Aorta (tissue), 5 donors: ENCODE measurements at regions of chr7 and their contacts with region 1.

Region 1: GRCh38 chr7:130010689-130011412 is 40.3 kb downstream of the ZC3HC1 start:
- DNase-seq: peak; percentile 87
- ATAC-seq: peak; percentile 86
- H3K4me3 ChIP-seq: no peak overlapping the region
- H3K27ac ChIP-seq: peak overlapping the region in 1 of 2 donors; percentile 47
- H3K4me1 ChIP-seq: peaks cover 0 to 3% of the 10 kb centered on the region in 2 donors
- H3K27me3 ChIP-seq: no peaks in the 10 kb centered on the region

Region 2: GRCh38 chr7:129664029-129665012 is 346.5 kb before region 1 on chr7:
- intact Hi-C with region 1: loop called (anchors 2 to 5 kb)
- DNase-seq: no peak
- ATAC-seq: no peak
- H3K4me3 ChIP-seq: no peak overlapping the region
- H3K27ac ChIP-seq: no peak overlapping the region
- H3K4me1 ChIP-seq: no peaks in the 10 kb centered on the region
- H3K27me3 ChIP-seq: no peaks in the 10 kb centered on the region

Region 3: DNA sequence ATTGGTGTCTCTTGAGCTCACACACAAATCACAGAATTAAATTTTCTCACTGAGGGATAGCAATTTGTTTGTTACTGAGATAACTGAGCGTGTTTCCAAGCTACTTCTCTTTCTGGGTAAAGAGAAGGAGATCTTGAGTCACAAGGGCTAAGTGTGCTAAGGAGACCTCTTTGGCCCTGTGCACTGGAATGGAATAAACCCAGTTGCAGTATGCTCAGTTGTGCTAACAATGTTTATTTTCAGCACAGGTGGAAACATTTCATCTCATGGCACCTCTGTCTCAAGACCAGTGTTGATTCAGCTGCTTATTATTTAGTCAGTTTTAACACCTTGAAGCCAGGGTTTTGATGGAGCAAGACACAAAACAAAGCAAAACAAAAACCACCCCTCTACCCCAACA is 35.5 kb before region 1 on chr7:
- intact Hi-C with region 1: no loop called
- DNase-seq: no peak
- ATAC-seq: no peak
- H3K4me3 ChIP-seq: no peak overlapping the region
- H3K27ac ChIP-seq: no peak overlapping the region
- H3K4me1 ChIP-seq: no peaks in the 10 kb centered on the region
- H3K27me3 ChIP-seq: no peaks in the 10 kb centered on the region

Region 4: GRCh38 chr7:130721486-130722280 is 710.8 kb after region 1 on chr7:
- intact Hi-C with region 1: no loop called
- DNase-seq: peak; percentile 76 to 85
- ATAC-seq: peak; percentile 82
- H3K4me3 ChIP-seq: no peak overlapping the region
- H3K27ac ChIP-seq: no peak overlapping the region
- H3K4me1 ChIP-seq: no peaks in the 10 kb centered on the region
- H3K27me3 ChIP-seq: no peaks in the 10 kb centered on the region